ENCODE measurements at regions of chr9 and their contacts with region 1.

Region 1: DNA sequence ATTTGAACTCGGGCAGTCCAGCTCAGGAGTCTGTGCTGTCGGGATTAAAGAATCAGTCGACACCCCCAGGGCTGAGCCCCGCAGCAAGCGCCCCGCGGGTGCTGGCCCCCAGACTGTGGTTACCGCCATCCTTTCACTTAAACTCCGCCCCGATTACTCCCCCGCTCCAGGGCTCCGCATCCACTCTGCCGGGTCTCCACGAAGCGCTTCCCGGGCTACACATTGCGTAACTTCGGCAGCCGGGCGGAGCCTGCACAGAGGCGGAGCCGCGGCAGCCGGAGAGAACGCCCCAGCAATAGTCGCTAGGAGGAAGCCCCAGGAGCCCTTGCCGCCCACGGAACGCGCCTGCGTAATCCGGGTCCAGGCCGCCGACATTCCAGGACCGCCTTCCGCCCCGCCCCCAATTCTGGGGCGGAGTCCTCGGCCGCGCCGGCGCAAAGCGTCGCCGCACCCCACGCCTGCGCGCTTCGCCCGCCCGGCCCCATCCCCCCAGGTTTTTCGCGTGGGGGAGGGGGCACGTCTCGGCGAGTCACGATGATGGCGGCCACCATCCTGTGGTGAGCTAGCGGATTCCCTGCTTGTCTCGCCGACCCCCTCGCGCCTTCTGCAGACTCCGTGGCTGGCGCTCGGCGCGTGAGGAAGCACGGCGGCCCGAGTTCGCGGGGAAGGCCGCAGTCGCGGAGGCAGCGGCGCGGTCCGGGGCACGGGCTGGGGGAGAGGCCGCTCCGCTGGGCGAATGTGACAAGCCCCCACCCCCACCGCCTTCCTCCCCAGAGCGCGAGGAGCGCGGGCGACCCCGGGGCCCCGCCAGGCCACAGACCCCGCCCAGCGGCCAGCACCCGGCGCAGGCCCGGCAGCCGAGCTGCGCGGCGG is at the start of gene RAD23B:
- DNase-seq: peak; percentile 97
- H3K4me3 ChIP-seq: peak within 1 kb of the TSS; percentile 94
- H3K27ac ChIP-seq: peak within 1 kb of the TSS; percentile 85
- H3K4me1 ChIP-seq: peaks cover 28% of the 10 kb centered on the region
- CTCF ChIP-seq: no peak
- total RNA-seq, gene RAD23B: 61.0 and 67.3 TPM in 2 replicates

Region 2: GRCh38 chr9:106753155-106753671 is 529.8 kb before region 1 on chr9:
- CTCF ChIA-PET with region 1: no interaction called
- POLR2A ChIA-PET with region 1: no interaction called
- intact Hi-C with region 1: loop called (anchors 10 kb)
- DNase-seq: peak; percentile 88
- H3K4me3 ChIP-seq: peak overlapping the region; percentile 45
- H3K27ac ChIP-seq: peak overlapping the region; percentile 93
- H3K4me1 ChIP-seq: peaks cover 73% of the 10 kb centered on the region
- CTCF ChIP-seq: no peak

Region 3: GRCh38 chr9:107260437-107261086 is 22.4 kb before region 1 on chr9:
- CTCF ChIA-PET with region 1: interaction called, 3 read pairs
- POLR2A ChIA-PET with region 1: interaction called, 21 read pairs
- intact Hi-C with region 1: no loop called
- DNase-seq: peak; percentile 86
- H3K4me3 ChIP-seq: peak overlapping the region; percentile 44
- H3K27ac ChIP-seq: peak overlapping the region; percentile 64
- H3K4me1 ChIP-seq: peaks cover 24% of the 10 kb centered on the region
- CTCF ChIP-seq: 0 out of 2 replicates have a peak, but pooled peaks have one; percentile 12

Region 4: GRCh38 chr9:107269681-107270080 is 13.3 kb before region 1 on chr9:
- CTCF ChIA-PET with region 1: no interaction called
- POLR2A ChIA-PET with region 1: interaction called, 13 read pairs
- intact Hi-C with region 1: no loop called
- DNase-seq: no peak
- H3K4me3 ChIP-seq: no peak overlapping the region
- H3K27ac ChIP-seq: no peak overlapping the region
- H3K4me1 ChIP-seq: no peaks in the 10 kb centered on the region
- CTCF ChIP-seq: no peak

Region 5: GRCh38 chr9:107299437-107299836 is 16.4 kb after region 1 on chr9:
- CTCF ChIA-PET with region 1: no interaction called
- POLR2A ChIA-PET with region 1: interaction called, 5 read pairs
- intact Hi-C with region 1: loop called (anchors 2 kb)
- DNase-seq: no peak
- H3K4me3 ChIP-seq: no peak overlapping the region
- H3K27ac ChIP-seq: no peak overlapping the region
- H3K4me1 ChIP-seq: peaks cover 11% of the 10 kb centered on the region
- CTCF ChIP-seq: peak; percentile 54; the same call in 1 of the 2 replicates

Region 6: DNA sequence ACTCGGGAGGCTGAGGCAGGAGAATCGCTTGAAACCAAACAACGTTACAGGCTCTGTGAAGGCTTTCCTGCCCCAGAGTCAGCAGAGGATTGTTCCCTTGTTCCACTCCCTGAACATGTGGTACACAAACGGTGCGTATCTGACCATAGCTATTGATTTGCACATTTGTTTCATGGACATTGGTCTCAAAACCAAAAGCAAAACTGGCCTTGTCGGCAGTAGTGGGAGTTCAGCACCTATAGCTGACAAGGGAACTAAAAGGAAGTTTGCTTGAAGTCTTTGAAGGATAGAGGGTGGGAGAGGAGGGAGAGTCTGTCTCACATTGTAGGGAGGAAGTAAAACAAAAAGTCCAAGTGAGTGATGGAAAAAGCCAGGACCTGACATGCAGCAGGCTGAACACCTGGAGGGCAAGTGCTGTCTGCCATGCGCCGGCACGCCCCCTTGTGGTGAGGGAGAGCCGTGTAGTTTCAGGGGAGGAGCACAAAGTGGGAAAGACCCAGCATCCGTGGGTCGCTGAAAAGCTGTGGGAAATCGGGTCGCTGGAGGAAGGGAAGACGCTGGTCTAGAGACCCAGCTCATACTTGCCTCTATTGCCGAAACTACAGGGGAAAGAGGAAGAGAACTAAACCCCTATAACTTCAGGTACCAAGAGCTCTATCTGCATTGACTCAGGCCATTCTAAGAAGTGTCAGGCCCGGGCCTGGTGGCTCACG is 58.1 kb after region 1 on chr9:
- CTCF ChIA-PET with region 1: interaction called, 3 read pairs
- POLR2A ChIA-PET with region 1: interaction called, 3 read pairs
- intact Hi-C with region 1: loop called (anchors 5 kb)
- DNase-seq: peak; percentile 78
- H3K4me3 ChIP-seq: no peak overlapping the region
- H3K27ac ChIP-seq: no peak overlapping the region
- H3K4me1 ChIP-seq: no peaks in the 10 kb centered on the region
- CTCF ChIP-seq: peak; percentile 93

Measured in OCI-LY7 (cell line).